ENCODE measurements at regions of chr11 and their contacts with region 1.

Region 1: GRCh38 chr11:13343931-13344717 is 66.5 kb downstream of the BMAL1 start:
- DNase-seq: peak; percentile 81 to 91
- H3K4me3 ChIP-seq: no peak overlapping the region
- H3K27ac ChIP-seq: no peak overlapping the region
- H3K4me1 ChIP-seq: peaks cover 14 to 31% (median 22%) of the 10 kb centered on the region in 4 donors
- H3K27me3 ChIP-seq: no peaks in the 10 kb centered on the region
- CTCF ChIP-seq: peak in 5 of 7 experiments; percentile 62 to 84 (median 77)
- EP300 ChIP-seq: no peak
- POLR2A ChIP-seq: no peak

Region 2: DNA sequence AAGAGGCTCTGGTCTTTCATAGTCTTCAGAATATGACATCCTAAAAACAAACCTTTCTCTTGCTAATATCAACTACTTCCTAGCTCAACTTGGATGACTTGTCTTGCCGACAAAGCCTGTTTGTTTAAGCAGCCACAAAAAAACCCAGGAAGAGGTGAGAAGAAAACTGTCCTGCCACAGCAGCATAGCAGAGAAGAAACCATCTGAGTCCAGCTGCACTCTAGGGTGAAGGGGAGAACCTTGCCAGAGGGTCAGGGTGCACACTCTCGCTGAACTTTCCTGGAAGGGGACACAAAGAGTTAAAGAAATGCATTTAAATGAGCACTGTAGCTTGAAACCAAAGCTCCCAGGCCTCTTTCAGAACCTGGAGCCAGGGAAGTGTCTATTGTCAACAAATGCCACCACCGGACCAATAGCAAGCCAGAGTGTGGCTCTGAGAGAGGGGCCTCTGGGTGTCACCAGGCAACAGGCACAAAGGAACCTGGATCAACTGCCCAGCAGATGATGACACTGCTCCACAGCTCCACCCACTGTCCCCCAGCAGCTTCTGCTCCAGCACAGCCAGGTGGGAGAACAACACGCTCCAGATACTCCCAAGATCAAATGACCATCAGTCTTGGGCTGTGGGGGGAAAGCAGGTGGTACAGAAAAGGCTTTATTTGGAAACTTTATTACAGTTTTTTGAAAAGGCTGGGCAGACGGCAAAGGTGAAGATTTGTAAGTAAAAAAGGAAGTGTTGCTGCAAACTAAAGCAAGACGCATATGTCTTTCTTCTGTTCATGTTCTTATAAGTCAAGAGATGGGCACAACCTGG is 229.4 kb before region 1 on chr11:
- intact Hi-C with region 1: no loop called
- DNase-seq: peak; percentile 50 to 88
- H3K4me3 ChIP-seq: no peak overlapping the region
- H3K27ac ChIP-seq: peak overlapping the region in 1 of 5 donors; percentile 20
- H3K4me1 ChIP-seq: peaks cover 0 to 17% (median 0%) of the 10 kb centered on the region in 4 donors
- H3K27me3 ChIP-seq: no peaks in the 10 kb centered on the region
- CTCF ChIP-seq: peak in 1 of 7 experiments; percentile 23
- EP300 ChIP-seq: no peak
- POLR2A ChIP-seq: no peak

Region 3: GRCh38 chr11:13169709-13170108 is 174.4 kb before region 1 on chr11:
- intact Hi-C with region 1: no loop called
- DNase-seq: peak in 1 of 2 donors; percentile 24
- H3K4me3 ChIP-seq: no peak overlapping the region
- H3K27ac ChIP-seq: no peak overlapping the region
- H3K4me1 ChIP-seq: peaks cover 0 to 12% (median 5%) of the 10 kb centered on the region in 4 donors
- H3K27me3 ChIP-seq: no peaks in the 10 kb centered on the region
- CTCF ChIP-seq: no peak
- EP300 ChIP-seq: no peak
- POLR2A ChIP-seq: no peak

Region 4: GRCh38 chr11:13210424-13210823 is 133.7 kb before region 1 on chr11:
- intact Hi-C with region 1: loop called (anchors 5 kb)
- DNase-seq: peak; percentile 73 to 88
- H3K4me3 ChIP-seq: no peak overlapping the region
- H3K27ac ChIP-seq: no peak overlapping the region
- H3K4me1 ChIP-seq: peaks cover 12 to 25% (median 14%) of the 10 kb centered on the region in 4 donors
- H3K27me3 ChIP-seq: peaks cover 0 to 13% (median 0%) of the 10 kb centered on the region in 3 donors
- CTCF ChIP-seq: peak in 5 of 7 experiments; percentile 41 to 84 (median 63)
- EP300 ChIP-seq: no peak
- POLR2A ChIP-seq: no peak

Region 5: GRCh38 chr11:13289081-13289480 is 55.0 kb before region 1 on chr11:
- intact Hi-C with region 1: loop called (anchors 10 kb)
- DNase-seq: peak in 1 of 2 donors; percentile 37
- H3K4me3 ChIP-seq: no peak overlapping the region
- H3K27ac ChIP-seq: no peak overlapping the region
- H3K4me1 ChIP-seq: peaks cover 7 to 30% (median 16%) of the 10 kb centered on the region in 4 donors
- H3K27me3 ChIP-seq: no peaks in the 10 kb centered on the region
- CTCF ChIP-seq: no peak
- EP300 ChIP-seq: no peak
- POLR2A ChIP-seq: no peak